ENCODE measurements at regions of chr18 and their contacts with region 1.

Region 1: DNA sequence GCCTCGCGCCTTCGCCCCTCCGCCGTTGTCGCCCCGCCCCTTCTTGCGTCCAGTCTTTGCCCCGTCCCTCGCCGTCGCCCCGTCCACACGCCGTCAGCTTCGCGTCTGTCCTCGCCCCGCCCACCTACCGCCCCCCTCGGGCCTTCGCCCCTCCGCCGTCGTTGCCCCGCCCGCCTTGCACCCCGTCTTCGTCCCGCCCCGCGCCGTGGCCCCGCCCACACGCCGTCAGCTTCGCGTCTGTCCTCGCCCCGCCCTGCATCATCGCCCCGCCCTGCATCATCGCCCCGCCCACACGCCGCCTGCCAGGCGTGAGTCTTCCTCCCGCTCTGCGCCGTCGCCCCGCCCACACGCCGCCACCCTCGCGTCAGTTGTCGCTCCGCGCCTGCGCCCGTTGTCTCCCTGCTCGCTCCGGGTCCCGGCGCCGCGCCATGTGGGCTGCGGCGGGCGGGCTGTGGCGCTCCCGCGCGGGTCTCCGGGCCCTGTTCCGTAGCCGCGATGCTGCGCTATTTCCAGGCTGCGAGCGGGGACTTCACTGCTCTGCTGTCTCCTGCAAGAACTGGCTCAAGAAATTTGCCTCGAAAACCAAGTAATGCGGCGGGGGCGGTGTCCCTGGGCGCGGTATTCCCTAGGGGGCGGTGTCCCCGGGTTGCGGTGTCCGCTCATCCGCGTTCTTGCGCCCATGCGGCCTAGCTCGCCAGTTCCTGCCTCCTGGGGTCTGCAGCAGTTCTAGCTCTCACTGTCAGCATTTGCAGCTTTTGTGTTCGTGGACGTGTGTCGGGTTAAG is at the start of gene RBFA:
- DNase-seq: peak; percentile 100
- ATAC-seq: peak; percentile 93 to 96 (median 95)
- H3K4me3 ChIP-seq: peak within 1 kb of the TSS; percentile 56 to 98 (median 84)
- H3K27ac ChIP-seq: peak within 1 kb of the TSS; percentile 69 to 91 (median 87)
- H3K4me1 ChIP-seq: peaks cover 0 to 18% (median 10%) of the 10 kb centered on the region in 12 donors
- H3K27me3 ChIP-seq: no peaks in the 10 kb centered on the region
- CTCF ChIP-seq: peak in 11 of 12 donors; percentile 12 to 52 (median 42)
- POLR2A ChIP-seq: peak in 1 of 2 donors; percentile 81
- total RNA-seq, gene RBFA: 15.5 to 32.2 (median 21.6) TPM

Region 2: DNA sequence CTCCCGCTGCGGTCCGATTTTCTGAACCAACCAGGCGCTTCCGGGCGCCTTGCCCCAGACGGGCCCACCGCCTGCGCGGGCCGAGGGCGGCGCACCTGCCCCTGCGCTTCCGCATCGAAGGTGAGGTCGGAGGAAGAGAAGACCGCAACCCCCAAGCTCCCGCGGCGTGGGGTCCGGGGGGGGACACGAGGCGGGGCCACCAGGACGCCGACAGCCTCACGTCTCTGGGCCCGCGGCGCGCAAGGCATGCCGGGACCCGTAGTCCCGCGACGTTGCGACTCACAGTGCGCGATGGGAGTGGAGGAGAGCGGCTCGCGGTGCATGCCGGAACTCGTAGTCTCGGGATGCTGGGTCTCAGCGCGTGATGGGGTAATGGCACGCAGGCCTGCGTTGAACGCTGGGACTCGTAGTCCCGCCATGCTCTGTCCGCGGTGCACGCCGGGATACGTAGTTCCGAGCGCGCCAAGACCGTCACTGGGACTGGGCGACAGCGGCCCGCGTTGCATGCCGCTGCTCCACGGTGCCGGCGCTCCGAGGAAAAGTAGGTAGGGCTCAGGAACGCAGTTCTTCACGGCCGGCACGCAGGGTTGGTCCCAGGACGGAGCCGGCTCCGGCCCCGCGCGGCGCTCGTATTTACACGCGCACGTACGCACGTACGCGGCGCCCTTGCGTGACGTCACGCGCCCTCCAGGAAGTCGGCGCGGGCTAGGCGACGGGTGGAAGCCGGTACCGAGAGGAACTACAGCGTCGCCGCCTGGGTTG is 355.0 kb before region 1 on chr18 and contains the start of gene CTDP1:
- intact Hi-C with region 1: loop called in 3 of 10 experiments (anchors 2 to 5 kb)
- DNase-seq: peak; percentile 99 to 100 (median 99)
- ATAC-seq: peak; percentile 98 to 99 (median 98)
- H3K4me3 ChIP-seq: peak within 1 kb of the TSS; percentile 61 to 99 (median 88)
- H3K27ac ChIP-seq: peak within 1 kb of the TSS; percentile 94 to 100 (median 99)
- H3K4me1 ChIP-seq: peaks cover 6 to 60% (median 32%) of the 10 kb centered on the region in 12 donors
- H3K27me3 ChIP-seq: no peaks in the 10 kb centered on the region
- CTCF ChIP-seq: no peak
- POLR2A ChIP-seq: peak in 1 of 2 donors; percentile 54
- total RNA-seq, gene CTDP1: 6.0 to 17.1 (median 10.3) TPM

Region 3: GRCh38 chr18:79951578-79952455 is 82.4 kb before region 1 on chr18 and contains the start of gene SLC66A2:
- intact Hi-C with region 1: loop called in 4 of 10 experiments (anchors 1 to 10 kb)
- DNase-seq: peak; percentile 93 to 98 (median 94)
- ATAC-seq: peak; percentile 84 to 94 (median 92)
- H3K4me3 ChIP-seq: peak within 1 kb of the TSS; percentile 82 to 98 (median 90)
- H3K27ac ChIP-seq: peak within 1 kb of the TSS; percentile 73 to 94 (median 86)
- H3K4me1 ChIP-seq: peaks cover 0 to 51% (median 35%) of the 10 kb centered on the region in 12 donors
- H3K27me3 ChIP-seq: no peaks in the 10 kb centered on the region
- CTCF ChIP-seq: peak in 2 of 12 donors; percentile 4 to 27
- POLR2A ChIP-seq: peak; percentile 31 to 74
- total RNA-seq, gene SLC66A2: 19.7 to 33.4 (median 26.6) TPM

Region 4: GRCh38 chr18:79965119-79965902 is 68.9 kb before region 1 on chr18:
- intact Hi-C with region 1: no loop called
- DNase-seq: no peak
- ATAC-seq: peak; percentile 16 to 64 (median 50)
- H3K4me3 ChIP-seq: peak overlapping the region; percentile 46 to 81 (median 73)
- H3K27ac ChIP-seq: peak overlapping the region; percentile 15 to 82 (median 76)
- H3K4me1 ChIP-seq: peaks cover 0 to 18% (median 8%) of the 10 kb centered on the region in 12 donors
- H3K27me3 ChIP-seq: peaks cover 0 to 5% (median 0%) of the 10 kb centered on the region in 9 donors
- CTCF ChIP-seq: no peak
- POLR2A ChIP-seq: no peak

Region 5: GRCh38 chr18:79988451-79989194 is 45.6 kb before region 1 on chr18 and contains the start of gene TXNL4A:
- intact Hi-C with region 1: loop called in 8 of 10 experiments (anchors 1 to 10 kb)
- DNase-seq: peak; percentile 86 to 93 (median 90)
- ATAC-seq: peak; percentile 97 to 99 (median 98)
- H3K4me3 ChIP-seq: peak within 1 kb of the TSS; percentile 67 to 99 (median 92)
- H3K27ac ChIP-seq: peak within 1 kb of the TSS; percentile 84 to 99 (median 96)
- H3K4me1 ChIP-seq: peaks cover 0 to 40% (median 19%) of the 10 kb centered on the region in 12 donors
- H3K27me3 ChIP-seq: no peaks in the 10 kb centered on the region
- CTCF ChIP-seq: no peak
- POLR2A ChIP-seq: peak; percentile 58 to 94
- total RNA-seq, gene TXNL4A: 35.2 to 113 (median 90.9) TPM

Region 6: GRCh38 chr18:80009661-80010550 is 24.4 kb before region 1 on chr18:
- intact Hi-C with region 1: loop called in 1 of 10 experiments (anchors 1 kb)
- DNase-seq: peak; percentile 78 to 92 (median 81)
- ATAC-seq: peak; percentile 98 to 99 (median 99)
- H3K4me3 ChIP-seq: no peak overlapping the region
- H3K27ac ChIP-seq: peak overlapping the region in 11 of 12 donors; percentile 44 to 78 (median 70)
- H3K4me1 ChIP-seq: peaks cover 0 to 10% (median 0%) of the 10 kb centered on the region in 12 donors
- H3K27me3 ChIP-seq: no peaks in the 10 kb centered on the region
- CTCF ChIP-seq: no peak
- POLR2A ChIP-seq: no peak

Region 7: DNA sequence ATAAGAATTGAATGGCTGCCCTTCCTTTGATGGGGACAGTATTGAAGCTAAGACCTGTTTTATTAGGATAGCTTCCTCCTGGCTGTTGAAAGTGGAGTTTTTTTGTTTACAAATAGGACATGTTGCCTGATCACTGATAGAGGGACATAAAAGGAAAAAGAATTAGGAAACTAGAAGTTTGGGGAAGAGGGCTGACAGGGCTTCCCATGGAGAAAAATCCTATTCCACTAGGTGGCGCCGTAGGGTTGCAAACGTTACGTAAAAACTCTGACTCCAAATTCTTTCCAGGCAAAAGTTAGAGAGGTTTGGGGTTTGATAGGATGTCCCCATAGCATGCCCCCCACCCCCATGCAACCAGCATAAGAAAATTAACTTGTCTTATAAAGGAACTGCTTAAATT is 11.1 kb before region 1 on chr18:
- intact Hi-C with region 1: no loop called
- DNase-seq: no peak
- ATAC-seq: no peak
- H3K4me3 ChIP-seq: no peak overlapping the region
- H3K27ac ChIP-seq: no peak overlapping the region
- H3K4me1 ChIP-seq: no peaks in the 10 kb centered on the region
- H3K27me3 ChIP-seq: no peaks in the 10 kb centered on the region
- CTCF ChIP-seq: peak in 2 of 12 donors; percentile 14 to 16
- POLR2A ChIP-seq: no peak

Region 8: GRCh38 chr18:80108728-80109675 is 74.7 kb after region 1 on chr18 and contains the start of gene ADNP2:
- intact Hi-C with region 1: loop called in 6 of 10 experiments (anchors 2 to 5 kb)
- DNase-seq: peak; percentile 77 to 90 (median 87)
- ATAC-seq: peak; percentile 90 to 95 (median 94)
- H3K4me3 ChIP-seq: peak within 1 kb of the TSS; percentile 52 to 98 (median 72)
- H3K27ac ChIP-seq: peak within 1 kb of the TSS; percentile 77 to 95 (median 86)
- H3K4me1 ChIP-seq: peaks cover 0 to 35% (median 26%) of the 10 kb centered on the region in 12 donors
- H3K27me3 ChIP-seq: no peaks in the 10 kb centered on the region
- CTCF ChIP-seq: no peak
- POLR2A ChIP-seq: no peak
- total RNA-seq, gene ADNP2: 6.7 to 13.1 (median 8.8) TPM

Region 9: GRCh38 chr18:80119111-80119510 is 84.9 kb after region 1 on chr18:
- intact Hi-C with region 1: no loop called
- DNase-seq: no peak
- ATAC-seq: no peak
- H3K4me3 ChIP-seq: no peak overlapping the region
- H3K27ac ChIP-seq: no peak overlapping the region
- H3K4me1 ChIP-seq: peaks cover 0 to 3% (median 0%) of the 10 kb centered on the region in 12 donors
- H3K27me3 ChIP-seq: no peaks in the 10 kb centered on the region
- CTCF ChIP-seq: no peak
- POLR2A ChIP-seq: no peak

Region 10: GRCh38 chr18:80130555-80130954 is 96.3 kb after region 1 on chr18:
- intact Hi-C with region 1: no loop called
- DNase-seq: no peak
- ATAC-seq: no peak
- H3K4me3 ChIP-seq: no peak overlapping the region
- H3K27ac ChIP-seq: no peak overlapping the region
- H3K4me1 ChIP-seq: no peaks in the 10 kb centered on the region
- H3K27me3 ChIP-seq: no peaks in the 10 kb centered on the region
- CTCF ChIP-seq: no peak
- POLR2A ChIP-seq: no peak

Measured in heart left ventricle (tissue), 16 donors.